Mammary epithelial cell (primary cell): ENCODE measurements at regions of chr2 and their contacts with region 1.

Region 1: DNA sequence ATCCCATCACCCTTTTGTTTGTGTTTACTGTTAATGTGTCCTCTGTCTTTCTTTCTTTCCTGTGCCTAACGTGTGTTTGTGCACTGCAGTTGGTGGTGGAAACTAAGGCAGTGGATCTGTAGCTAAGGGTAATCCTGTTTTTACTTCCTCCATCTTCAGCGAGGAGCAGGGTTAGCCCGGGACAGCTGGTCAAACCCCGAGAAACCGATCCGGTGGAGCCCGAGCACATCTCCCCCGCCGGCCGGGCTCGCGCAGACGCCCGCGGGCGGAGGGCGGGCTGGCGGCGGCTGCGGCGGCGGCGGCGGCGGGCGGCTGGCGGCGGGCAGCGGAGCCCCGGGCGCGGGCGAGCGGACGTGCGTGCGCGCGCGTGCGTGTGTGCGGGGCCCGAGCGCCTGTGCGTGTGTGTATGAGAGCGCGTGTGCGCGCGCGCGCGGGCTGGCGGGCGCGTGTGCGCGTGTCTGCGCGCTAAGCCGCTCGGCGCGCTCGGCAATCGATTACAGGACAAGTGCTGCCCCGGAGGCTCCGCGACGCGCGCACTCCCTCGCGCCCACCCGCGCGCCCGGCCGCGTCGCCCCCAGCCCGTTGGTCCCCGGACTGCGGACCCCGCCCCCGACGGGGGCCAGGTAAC is at the start of gene IKZF2:
- DNase-seq: peak; percentile 85
- H3K4me3 ChIP-seq: peak within 1 kb of the TSS; percentile 83 to 98 (median 83)
- H3K27ac ChIP-seq: peak within 1 kb of the TSS; percentile 85
- H3K4me1 ChIP-seq: peaks cover 15% of the 10 kb centered on the region
- H3K27me3 ChIP-seq: no peaks in the 10 kb centered on the region
- CTCF ChIP-seq: no peak
- total RNA-seq, gene IKZF2: 17.3 to 27.9 TPM

Region 2: GRCh38 chr2:212618641-212619040 is 532.9 kb before region 1 on chr2:
- CTCF ChIA-PET with region 1: no interaction called
- dilution Hi-C with region 1: no loop called
- in situ Hi-C with region 1: no loop called
- intact Hi-C with region 1: loop called (anchors 5 kb)
- DNase-seq: peak; percentile 95
- H3K4me3 ChIP-seq: no peak overlapping the region
- H3K27ac ChIP-seq: peak overlapping the region; percentile 95
- H3K4me1 ChIP-seq: peaks cover 32% of the 10 kb centered on the region
- H3K27me3 ChIP-seq: no peaks in the 10 kb centered on the region
- CTCF ChIP-seq: no peak

Region 3: DNA sequence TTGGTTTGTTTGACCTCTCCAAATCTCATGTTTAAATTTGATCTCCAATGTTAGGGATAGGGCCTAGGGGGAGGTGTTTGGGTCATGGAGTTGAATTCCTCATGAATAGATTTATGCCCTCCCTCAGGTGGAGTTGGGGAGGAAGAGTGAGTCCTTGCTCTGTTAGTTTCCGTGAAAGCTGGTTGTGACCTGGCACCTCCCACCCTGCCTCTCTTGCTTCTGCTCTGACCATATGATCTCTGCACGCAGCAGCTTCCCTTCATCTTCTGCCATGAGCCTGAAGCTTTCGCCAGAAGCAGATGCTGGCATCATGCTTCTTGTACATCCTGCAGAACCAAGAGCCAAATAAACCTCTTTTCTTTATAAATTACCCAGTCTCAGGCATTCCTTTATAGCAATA is 381.3 kb before region 1 on chr2:
- CTCF ChIA-PET with region 1: interaction called, 13 read pairs
- dilution Hi-C with region 1: no loop called
- in situ Hi-C with region 1: loop called in 1 of 2 experiments (anchors 5 kb)
- intact Hi-C with region 1: no loop called
- DNase-seq: no peak
- H3K4me3 ChIP-seq: no peak overlapping the region
- H3K27ac ChIP-seq: no peak overlapping the region
- H3K4me1 ChIP-seq: no peaks in the 10 kb centered on the region
- H3K27me3 ChIP-seq: no peaks in the 10 kb centered on the region
- CTCF ChIP-seq: no peak

Region 4: DNA sequence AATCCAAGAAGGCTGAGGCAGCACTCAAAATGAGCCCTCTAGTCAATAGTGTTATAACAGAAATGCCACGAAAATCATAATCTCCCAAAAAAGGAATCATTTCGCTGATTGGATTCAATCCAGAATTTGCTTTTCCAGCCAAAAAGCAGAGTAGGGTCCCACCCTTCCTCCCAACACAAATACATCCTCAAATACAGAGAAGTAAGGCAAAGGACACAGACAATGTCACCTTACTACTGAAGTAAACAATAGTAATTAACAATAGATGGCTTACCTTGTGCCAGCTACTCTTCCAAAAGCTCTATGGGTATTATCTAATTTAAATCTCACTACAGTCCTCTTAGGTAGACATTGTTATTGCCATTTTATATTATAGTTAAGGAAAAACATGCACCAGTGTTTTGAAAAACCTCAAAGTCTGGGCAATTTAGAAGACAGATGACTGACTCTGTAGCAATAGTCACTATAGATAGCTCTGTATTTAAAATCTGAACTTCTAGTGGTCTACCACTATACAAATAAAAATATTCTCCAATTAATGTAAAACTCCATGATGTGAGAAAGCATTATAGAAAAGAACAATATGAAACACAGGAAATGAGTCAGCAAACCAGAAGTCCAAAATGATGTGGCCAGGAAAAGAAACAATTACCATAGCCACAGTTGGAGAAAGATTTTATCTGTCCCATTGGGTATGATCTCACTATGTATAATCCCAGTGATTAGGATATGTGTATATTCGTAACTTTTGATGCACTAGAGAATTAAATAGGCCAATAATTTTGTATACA is 307.9 kb before region 1 on chr2:
- CTCF ChIA-PET with region 1: no interaction called
- dilution Hi-C with region 1: no loop called
- in situ Hi-C with region 1: no loop called
- intact Hi-C with region 1: loop called (anchors 5 kb)
- DNase-seq: peak; percentile 94
- H3K4me3 ChIP-seq: peak overlapping the region in 1 of 3 experiments; percentile 15
- H3K27ac ChIP-seq: peak overlapping the region; percentile 100
- H3K4me1 ChIP-seq: peaks cover 42% of the 10 kb centered on the region
- H3K27me3 ChIP-seq: no peaks in the 10 kb centered on the region
- CTCF ChIP-seq: no peak

Region 5: DNA sequence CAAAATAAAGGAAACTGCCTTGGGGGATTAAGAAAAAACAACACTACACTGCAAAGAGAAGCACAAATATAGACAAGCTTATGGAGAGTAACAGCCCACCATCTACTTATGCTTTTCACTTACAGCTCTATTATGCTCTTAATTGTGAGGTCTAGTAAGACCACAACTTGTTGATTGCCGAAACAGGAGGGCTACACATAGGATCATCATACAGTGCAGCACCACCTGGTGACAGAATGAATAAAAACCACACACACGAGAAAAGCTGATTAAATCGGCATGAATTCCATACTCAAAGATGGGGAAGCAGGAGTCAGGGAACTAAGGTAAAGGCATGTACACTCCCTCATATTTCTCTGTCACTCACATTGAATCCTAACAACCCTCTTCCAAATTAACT is 259.4 kb before region 1 on chr2:
- CTCF ChIA-PET with region 1: no interaction called
- dilution Hi-C with region 1: no loop called
- in situ Hi-C with region 1: no loop called
- intact Hi-C with region 1: loop called (anchors 1 kb)
- DNase-seq: peak; percentile 59
- H3K4me3 ChIP-seq: no peak overlapping the region
- H3K27ac ChIP-seq: no peak overlapping the region
- H3K4me1 ChIP-seq: peaks cover 5% of the 10 kb centered on the region
- H3K27me3 ChIP-seq: no peaks in the 10 kb centered on the region
- CTCF ChIP-seq: peak; percentile 56 to 69

Region 6: GRCh38 chr2:213057977-213058376 is 93.6 kb before region 1 on chr2:
- CTCF ChIA-PET with region 1: no interaction called
- dilution Hi-C with region 1: no loop called
- in situ Hi-C with region 1: no loop called
- intact Hi-C with region 1: loop called (anchors 2 kb)
- DNase-seq: no peak
- H3K4me3 ChIP-seq: no peak overlapping the region
- H3K27ac ChIP-seq: no peak overlapping the region
- H3K4me1 ChIP-seq: no peaks in the 10 kb centered on the region
- H3K27me3 ChIP-seq: no peaks in the 10 kb centered on the region
- CTCF ChIP-seq: no peak

Region 7: DNA sequence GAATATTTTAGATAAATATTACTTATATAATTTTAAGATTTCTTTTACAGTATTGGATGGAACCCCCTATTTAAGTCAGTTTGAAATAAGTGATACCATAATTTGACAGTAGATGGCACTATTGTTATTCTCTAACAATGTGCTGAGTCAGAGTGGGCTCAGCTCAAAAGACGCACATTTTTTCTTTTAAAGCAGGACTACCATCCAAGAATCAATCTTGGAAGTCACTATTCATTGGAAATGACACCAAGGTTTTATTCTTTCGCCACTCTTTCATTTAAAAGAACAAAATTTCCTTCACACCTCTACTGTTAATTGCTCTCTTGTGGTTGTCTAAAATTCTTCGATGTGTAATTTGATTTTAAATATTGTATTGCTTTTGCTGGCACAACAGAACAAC is 100.1 kb after region 1 on chr2:
- CTCF ChIA-PET with region 1: no interaction called
- dilution Hi-C with region 1: no loop called
- in situ Hi-C with region 1: no loop called
- intact Hi-C with region 1: loop called (anchors 2 kb)
- DNase-seq: peak; percentile 31
- H3K4me3 ChIP-seq: no peak overlapping the region
- H3K27ac ChIP-seq: no peak overlapping the region
- H3K4me1 ChIP-seq: no peaks in the 10 kb centered on the region
- H3K27me3 ChIP-seq: no peaks in the 10 kb centered on the region
- CTCF ChIP-seq: peak; percentile 27 to 57